ENCODE measurements at regions of chr6 and their contacts with region 1.

Region 1: GRCh38 chr6:106979427-106979884 is 4.9 kb upstream of the CD24 start:
- DNase-seq: peak; percentile 68
- H3K4me3 ChIP-seq: no peak overlapping the region
- H3K27ac ChIP-seq: no peak overlapping the region
- H3K4me1 ChIP-seq: no peaks in the 10 kb centered on the region
- H3K27me3 ChIP-seq: no peaks in the 10 kb centered on the region
- CTCF ChIP-seq: peak; percentile 95 to 99

Region 2: GRCh38 chr6:106339334-106340029 is 640.0 kb before region 1 on chr6:
- CTCF ChIA-PET with region 1: interaction called, 6 read pairs
- dilution Hi-C with region 1: no loop called
- in situ Hi-C with region 1: no loop called
- intact Hi-C with region 1: loop called (anchors 1 kb)
- DNase-seq: peak; percentile 86
- H3K4me3 ChIP-seq: no peak overlapping the region
- H3K27ac ChIP-seq: peak overlapping the region; percentile 13
- H3K4me1 ChIP-seq: peaks cover 13% of the 10 kb centered on the region
- H3K27me3 ChIP-seq: no peaks in the 10 kb centered on the region
- CTCF ChIP-seq: peak; percentile 82 to 91

Region 3: GRCh38 chr6:106444777-106445507 is 534.5 kb before region 1 on chr6:
- CTCF ChIA-PET with region 1: no interaction called
- dilution Hi-C with region 1: no loop called
- in situ Hi-C with region 1: loop called (anchors 10 to 25 kb)
- intact Hi-C with region 1: loop called (anchors 1 kb)
- DNase-seq: peak; percentile 58
- H3K4me3 ChIP-seq: no peak overlapping the region
- H3K27ac ChIP-seq: no peak overlapping the region
- H3K4me1 ChIP-seq: peaks cover 31% of the 10 kb centered on the region
- H3K27me3 ChIP-seq: no peaks in the 10 kb centered on the region
- CTCF ChIP-seq: peak; percentile 71 to 74

Region 4: GRCh38 chr6:106608062-106608668 is 371.3 kb before region 1 on chr6:
- CTCF ChIA-PET with region 1: interaction called, 3 read pairs
- dilution Hi-C with region 1: no loop called
- in situ Hi-C with region 1: loop called in 1 of 2 experiments (anchors 5 kb)
- intact Hi-C with region 1: loop called (anchors 1 kb)
- DNase-seq: peak; percentile 66
- H3K4me3 ChIP-seq: no peak overlapping the region
- H3K27ac ChIP-seq: no peak overlapping the region
- H3K4me1 ChIP-seq: no peaks in the 10 kb centered on the region
- H3K27me3 ChIP-seq: no peaks in the 10 kb centered on the region
- CTCF ChIP-seq: peak; percentile 64 to 77

Region 5: GRCh38 chr6:106702451-106703110 is 276.9 kb before region 1 on chr6:
- CTCF ChIA-PET with region 1: no interaction called
- dilution Hi-C with region 1: no loop called
- in situ Hi-C with region 1: no loop called
- intact Hi-C with region 1: loop called (anchors 5 kb)
- DNase-seq: no peak
- H3K4me3 ChIP-seq: no peak overlapping the region
- H3K27ac ChIP-seq: no peak overlapping the region
- H3K4me1 ChIP-seq: no peaks in the 10 kb centered on the region
- H3K27me3 ChIP-seq: no peaks in the 10 kb centered on the region
- CTCF ChIP-seq: no peak

Region 6: DNA sequence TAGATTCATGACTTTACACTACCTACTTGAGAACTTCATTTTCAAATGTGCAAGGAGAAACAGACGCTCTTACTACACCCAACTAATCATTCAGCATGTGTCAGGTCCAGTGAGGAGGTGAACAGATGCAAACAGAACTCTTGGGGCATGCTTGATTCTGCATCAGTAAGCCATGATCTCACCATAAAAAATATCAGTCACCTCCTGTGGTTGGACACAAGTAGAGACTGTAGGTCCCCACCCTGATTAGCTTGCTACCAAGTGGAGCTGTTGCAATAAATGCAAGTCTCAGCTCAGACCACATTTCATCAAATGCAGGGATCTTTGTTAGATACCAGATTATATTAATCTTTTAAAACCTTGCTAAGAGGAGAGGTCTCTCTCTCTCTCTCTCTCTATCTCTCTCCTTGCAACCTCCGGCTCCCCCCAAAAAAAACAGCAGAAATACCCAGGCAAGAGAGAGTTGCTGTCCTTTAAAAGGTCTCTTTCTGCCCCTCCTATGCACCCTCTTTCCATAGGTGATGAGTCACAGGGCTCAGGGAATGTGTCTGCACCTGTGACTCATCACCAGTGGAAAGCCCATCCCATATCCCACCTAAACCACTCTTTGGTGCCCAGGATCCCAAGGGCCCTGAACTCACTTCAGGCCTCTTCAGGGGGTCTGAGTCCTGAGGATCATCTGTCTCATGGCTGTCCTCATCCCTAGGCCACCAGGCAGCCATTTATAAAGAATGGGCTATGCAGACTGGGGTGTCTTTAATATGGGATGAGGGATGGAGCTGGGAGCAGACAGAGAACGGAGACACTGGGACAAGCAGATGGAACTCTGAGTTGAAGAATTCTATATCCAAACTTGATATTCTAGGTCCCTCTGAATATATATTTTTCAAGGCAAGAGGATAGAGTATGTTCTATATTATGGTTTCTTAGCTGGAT is 195.6 kb before region 1 on chr6:
- CTCF ChIA-PET with region 1: no interaction called
- dilution Hi-C with region 1: no loop called
- in situ Hi-C with region 1: no loop called
- intact Hi-C with region 1: loop called (anchors 1 kb)
- DNase-seq: peak; percentile 90
- H3K4me3 ChIP-seq: no peak overlapping the region
- H3K27ac ChIP-seq: peak overlapping the region; percentile 72
- H3K4me1 ChIP-seq: peaks cover 19% of the 10 kb centered on the region
- H3K27me3 ChIP-seq: no peaks in the 10 kb centered on the region
- CTCF ChIP-seq: no peak

Region 7: DNA sequence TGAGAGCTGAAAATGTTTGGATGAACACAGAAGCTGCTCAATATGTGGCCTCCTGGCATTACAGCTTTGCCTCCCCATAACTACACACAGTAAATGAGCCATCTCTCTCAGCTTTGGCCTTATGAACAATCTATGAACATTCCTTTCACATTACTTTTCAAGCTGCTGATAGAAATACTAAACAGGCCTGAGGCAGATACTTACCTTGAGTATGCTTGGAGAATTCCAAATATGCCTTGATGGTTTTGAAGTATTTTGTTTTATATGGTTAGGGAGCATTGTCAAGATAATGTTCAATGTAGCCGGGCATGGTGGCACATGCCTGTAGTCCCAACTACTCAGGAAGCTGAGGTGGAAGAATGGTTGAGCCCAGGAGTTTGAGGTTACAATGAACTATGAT is 109.4 kb before region 1 on chr6:
- CTCF ChIA-PET with region 1: no interaction called
- dilution Hi-C with region 1: no loop called
- in situ Hi-C with region 1: no loop called
- intact Hi-C with region 1: loop called (anchors 1 kb)
- DNase-seq: peak; percentile 96
- H3K4me3 ChIP-seq: no peak overlapping the region
- H3K27ac ChIP-seq: peak overlapping the region; percentile 88
- H3K4me1 ChIP-seq: peaks cover 41% of the 10 kb centered on the region
- H3K27me3 ChIP-seq: no peaks in the 10 kb centered on the region
- CTCF ChIP-seq: no peak